Prostate gland (tissue), 2 donors: ENCODE measurements at regions of chr20 and their contacts with region 1.

Region 1: GRCh38 chr20:35771689-35772562 is at the start of gene PHF20:
- DNase-seq: peak; percentile 98
- H3K4me3 ChIP-seq: peak within 1 kb of the TSS; percentile 64 to 70
- H3K27ac ChIP-seq: peak within 1 kb of the TSS; percentile 94 to 95
- H3K4me1 ChIP-seq: peaks cover 6% of the 10 kb centered on the region
- H3K27me3 ChIP-seq: no peaks in the 10 kb centered on the region
- CTCF ChIP-seq: peak in 1 of 4 experiments; percentile 39
- POLR2A ChIP-seq: peak; percentile 61
- total RNA-seq, gene PHF20: 34.7 to 61.1 TPM

Region 2: DNA sequence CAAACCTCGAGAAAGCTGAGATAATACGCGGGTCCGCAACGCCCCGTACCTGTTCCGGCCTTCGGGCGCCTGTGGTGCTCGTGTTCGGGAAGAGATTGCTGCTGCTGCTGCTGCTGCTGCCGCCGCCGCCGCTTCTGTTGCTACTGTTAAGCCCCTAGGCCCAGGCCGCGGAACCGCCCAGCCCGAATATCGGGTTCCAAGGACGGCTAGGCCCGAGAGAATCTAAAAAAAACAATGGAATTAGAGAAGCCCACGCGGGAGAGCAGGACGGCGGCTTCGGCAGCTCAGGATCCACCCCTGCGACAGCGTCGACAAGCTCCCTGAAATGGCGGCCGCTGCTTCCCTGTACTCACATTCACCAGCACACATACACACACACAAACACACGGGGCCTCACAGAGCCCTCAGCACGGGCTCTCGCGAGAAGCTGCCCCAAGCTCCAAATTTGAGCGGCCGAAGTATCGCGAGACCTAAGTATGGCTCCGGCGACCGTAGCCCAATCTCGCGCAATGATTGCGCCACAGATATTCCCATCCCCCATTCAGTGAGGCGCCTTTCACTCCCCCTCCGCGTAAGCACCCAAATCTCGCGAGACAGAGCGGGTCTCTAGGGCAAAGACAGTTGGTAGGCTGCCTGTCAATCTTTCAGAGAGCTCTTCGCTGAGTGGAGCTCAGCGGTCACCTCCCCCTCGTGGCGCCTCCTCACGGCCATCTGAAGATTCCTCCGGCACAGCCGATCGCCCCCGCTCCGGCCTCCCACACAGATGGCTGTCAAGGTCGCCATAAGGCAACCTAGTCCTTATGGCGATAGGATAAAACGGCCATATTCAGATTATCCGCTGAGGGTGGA is 29.8 kb before region 1 on chr20 and contains the start of gene RBM39:
- intact Hi-C with region 1: loop called (anchors 2 kb)
- DNase-seq: peak; percentile 100
- H3K4me3 ChIP-seq: peak within 1 kb of the TSS; percentile 71 to 79
- H3K27ac ChIP-seq: peak within 1 kb of the TSS; percentile 98 to 99
- H3K4me1 ChIP-seq: peaks cover 6% of the 10 kb centered on the region
- H3K27me3 ChIP-seq: no peaks in the 10 kb centered on the region
- CTCF ChIP-seq: peak; percentile 41 to 84 (median 59)
- POLR2A ChIP-seq: peak; percentile 88
- total RNA-seq, gene RBM39: 228 to 235 TPM

Region 3: DNA sequence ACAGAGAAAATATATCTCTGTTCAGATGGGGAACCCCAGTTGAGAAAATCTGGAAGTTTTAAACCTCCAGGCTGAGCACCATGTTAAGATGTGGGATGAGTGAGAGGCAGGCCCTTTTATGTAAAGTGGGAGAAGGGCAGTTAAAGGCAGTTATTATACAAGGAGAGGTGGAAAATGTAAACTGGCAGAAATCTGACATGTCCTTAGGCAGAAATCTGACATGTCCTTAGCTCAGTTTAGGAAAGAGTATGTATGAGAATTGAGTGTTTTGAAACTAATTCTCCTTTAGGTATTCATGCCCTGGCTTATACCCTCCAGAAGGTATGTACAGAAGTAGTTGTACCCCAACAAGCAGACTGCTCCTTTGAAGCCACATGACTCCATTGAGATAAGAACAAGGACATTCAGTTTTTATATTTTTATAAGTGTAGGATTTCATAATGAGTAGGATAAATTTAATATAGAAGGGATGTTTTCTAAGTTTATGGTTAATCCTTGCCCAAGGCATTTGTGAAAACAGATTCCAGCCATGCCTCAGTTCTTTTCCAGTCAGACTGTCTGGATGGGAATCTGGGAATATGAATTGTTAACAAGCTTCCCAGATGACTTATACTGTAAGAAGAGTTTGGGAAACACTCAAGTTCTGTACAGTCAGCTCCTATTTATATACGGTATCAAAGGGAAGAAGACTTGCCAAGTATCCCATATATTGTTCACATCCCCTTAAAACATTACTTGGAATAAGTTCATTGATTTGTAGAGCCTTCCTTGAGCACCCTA is 94.7 kb after region 1 on chr20:
- intact Hi-C with region 1: loop called (anchors 5 kb)
- DNase-seq: no peak
- H3K4me3 ChIP-seq: no peak overlapping the region
- H3K27ac ChIP-seq: no peak overlapping the region
- H3K4me1 ChIP-seq: no peaks in the 10 kb centered on the region
- H3K27me3 ChIP-seq: no peaks in the 10 kb centered on the region
- CTCF ChIP-seq: no peak
- POLR2A ChIP-seq: no peak